PC-9 (cell line): ENCODE measurements at regions of chr17 and their contacts with region 1.

Region 1: DNA sequence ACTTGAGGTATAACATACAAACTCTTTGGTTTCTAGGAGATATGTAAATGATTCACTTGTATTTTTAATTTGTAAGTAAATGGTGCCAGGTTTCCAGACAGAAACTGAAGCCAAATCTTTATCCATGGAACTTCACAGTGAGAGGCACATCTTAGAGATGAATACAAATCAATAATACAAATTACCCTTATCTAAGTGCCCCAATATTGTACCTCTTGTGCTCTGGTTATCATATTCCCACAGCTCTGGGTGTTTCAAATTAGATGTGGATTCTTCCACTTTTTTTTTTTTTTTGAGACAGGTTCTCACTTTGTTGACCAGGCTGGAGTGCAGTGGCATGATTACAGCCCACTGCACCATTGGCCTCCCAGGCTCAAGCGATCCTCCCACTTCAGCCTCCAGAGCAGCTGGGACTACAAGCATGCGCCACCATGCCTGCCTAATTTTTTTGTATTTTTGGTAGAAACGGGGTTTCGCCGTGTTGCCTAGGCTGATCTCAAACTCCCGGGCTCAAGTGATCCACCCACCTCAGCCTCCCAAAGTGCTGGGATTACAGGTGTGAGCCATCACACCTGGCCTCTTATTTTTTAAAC is 38.0 kb upstream of the DHX40 start:
- DNase-seq: no peak
- H3K4me3 ChIP-seq: no peak overlapping the region
- H3K27ac ChIP-seq: no peak overlapping the region
- H3K4me1 ChIP-seq: no peaks in the 10 kb centered on the region
- H3K27me3 ChIP-seq: no peaks in the 10 kb centered on the region
- CTCF ChIP-seq: no peak

Region 2: GRCh38 chr17:58412961-58413668 is 1114.3 kb before region 1 on chr17:
- CTCF ChIA-PET with region 1: no interaction called
- POLR2A ChIA-PET with region 1: no interaction called
- intact Hi-C with region 1: no loop called
- DNase-seq: peak in 1 of 2 experiments; percentile 53
- H3K4me3 ChIP-seq: no peak overlapping the region
- H3K27ac ChIP-seq: no peak overlapping the region
- H3K4me1 ChIP-seq: peaks cover 42% of the 10 kb centered on the region
- H3K27me3 ChIP-seq: no peaks in the 10 kb centered on the region
- CTCF ChIP-seq: no peak

Region 3: GRCh38 chr17:58504826-58505521 is 1022.4 kb before region 1 on chr17:
- CTCF ChIA-PET with region 1: interaction called, 13 read pairs
- POLR2A ChIA-PET with region 1: no interaction called
- intact Hi-C with region 1: no loop called
- DNase-seq: peak in 1 of 2 experiments; percentile 11
- H3K4me3 ChIP-seq: no peak overlapping the region
- H3K27ac ChIP-seq: no peak overlapping the region
- H3K4me1 ChIP-seq: no peaks in the 10 kb centered on the region
- H3K27me3 ChIP-seq: no peaks in the 10 kb centered on the region
- CTCF ChIP-seq: no peak